Heart right ventricle (tissue), 16 donors: ENCODE measurements at regions of chr19 and their contacts with region 1.

Region 1: GRCh38 chr19:13104360-13104847 is 1.7 kb upstream of the LYL1 start:
- DNase-seq: peak; percentile 80 to 85
- ATAC-seq: peak; percentile 8 to 51 (median 43)
- H3K4me3 ChIP-seq: peak overlapping the region in 6 of 10 donors; percentile 23 to 60 (median 28)
- H3K27ac ChIP-seq: peak overlapping the region; percentile 52 to 96 (median 92)
- H3K4me1 ChIP-seq: peaks cover 13 to 69% (median 53%) of the 10 kb centered on the region in 9 donors
- H3K27me3 ChIP-seq: no peaks in the 10 kb centered on the region
- CTCF ChIP-seq: peak; percentile 46 to 86 (median 72)

Region 2: DNA sequence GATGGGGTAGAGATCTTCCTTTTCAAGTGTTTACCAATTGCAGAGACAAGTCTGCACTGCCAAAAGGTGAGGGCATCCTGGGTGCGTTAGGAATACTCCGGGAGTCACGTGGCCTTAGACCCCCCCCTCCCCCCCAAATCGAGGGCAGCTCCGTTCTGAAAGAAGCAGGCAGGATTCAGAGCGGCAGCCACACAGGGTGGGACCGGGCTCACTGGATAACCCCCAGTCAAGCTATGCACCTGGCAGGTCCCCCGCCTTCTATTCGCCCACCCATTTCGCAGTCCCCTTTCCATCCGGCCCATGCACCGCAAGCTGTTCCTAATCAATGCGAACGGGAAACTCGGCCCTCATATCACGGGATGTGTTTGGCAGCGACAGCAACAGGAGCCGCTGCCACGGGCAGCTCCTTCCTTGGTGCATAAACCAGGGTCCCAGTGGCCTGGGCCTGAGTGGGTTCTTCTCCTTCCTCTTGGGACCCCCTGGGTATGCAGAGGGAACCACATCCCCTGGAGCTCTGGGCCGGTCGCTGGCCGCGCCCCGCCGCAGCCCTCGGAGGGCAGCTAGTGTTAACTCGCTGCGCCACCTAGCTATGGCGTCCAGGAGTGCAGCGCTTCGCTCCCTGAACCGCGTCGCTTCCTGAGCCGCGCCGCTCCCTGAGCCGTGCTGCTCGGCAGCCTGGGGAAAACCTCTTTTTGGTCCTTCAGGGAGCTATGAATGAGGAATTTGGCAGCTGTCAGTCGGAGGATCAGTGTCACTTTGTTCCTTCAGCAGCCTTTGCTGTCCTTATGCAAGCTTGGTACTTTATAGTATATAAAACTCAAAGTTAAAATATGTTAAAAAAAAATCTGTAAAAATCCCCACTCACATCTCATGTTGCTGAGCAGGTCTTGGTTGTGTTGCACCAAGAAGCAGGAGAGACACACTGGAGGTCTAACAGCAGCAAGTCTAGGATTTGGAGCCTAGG is 43.2 kb before region 1 on chr19:
- intact Hi-C with region 1: loop called in 1 of 10 experiments (anchors 5 kb)
- DNase-seq: peak; percentile 89 to 91
- ATAC-seq: peak; percentile 70 to 87 (median 78)
- H3K4me3 ChIP-seq: peak overlapping the region in 9 of 10 donors; percentile 33 to 56 (median 49)
- H3K27ac ChIP-seq: peak overlapping the region; percentile 67 to 99 (median 96)
- H3K4me1 ChIP-seq: peaks cover 75 to 100% (median 100%) of the 10 kb centered on the region in 9 donors
- H3K27me3 ChIP-seq: no peaks in the 10 kb centered on the region
- CTCF ChIP-seq: peak; percentile 95 to 99 (median 98)

Region 3: GRCh38 chr19:13093407-13094105 is 10.8 kb before region 1 on chr19:
- intact Hi-C with region 1: no loop called
- DNase-seq: peak; percentile 83
- ATAC-seq: peak; percentile 57 to 80 (median 67)
- H3K4me3 ChIP-seq: no peak overlapping the region
- H3K27ac ChIP-seq: peak overlapping the region; percentile 43 to 96 (median 90)
- H3K4me1 ChIP-seq: peaks cover 43 to 96% (median 83%) of the 10 kb centered on the region in 9 donors
- H3K27me3 ChIP-seq: no peaks in the 10 kb centered on the region
- CTCF ChIP-seq: peak; percentile 94 to 98 (median 96)